ENCODE measurements at regions of chr10 and their contacts with region 1.

Region 1: GRCh38 chr10:100653957-100654781 is 91.2 kb upstream of the PAX2 start:
- DNase-seq: no peak
- H3K4me3 ChIP-seq: peak overlapping the region; percentile 29
- H3K4me3 Mint-ChIP-seq: peak overlapping the region; percentile 90
- H3K27ac Mint-ChIP-seq: peak overlapping the region; percentile 26
- H3K4me1 ChIP-seq: peaks cover 12% of the 10 kb centered on the region
- H3K4me1 Mint-ChIP-seq: peaks cover 18% of the 10 kb centered on the region
- H3K27me3 ChIP-seq: peaks cover 2% of the 10 kb centered on the region
- H3K27me3 Mint-ChIP-seq: peaks cover 39% of the 10 kb centered on the region
- CTCF ChIP-seq: no peak

Region 2: DNA sequence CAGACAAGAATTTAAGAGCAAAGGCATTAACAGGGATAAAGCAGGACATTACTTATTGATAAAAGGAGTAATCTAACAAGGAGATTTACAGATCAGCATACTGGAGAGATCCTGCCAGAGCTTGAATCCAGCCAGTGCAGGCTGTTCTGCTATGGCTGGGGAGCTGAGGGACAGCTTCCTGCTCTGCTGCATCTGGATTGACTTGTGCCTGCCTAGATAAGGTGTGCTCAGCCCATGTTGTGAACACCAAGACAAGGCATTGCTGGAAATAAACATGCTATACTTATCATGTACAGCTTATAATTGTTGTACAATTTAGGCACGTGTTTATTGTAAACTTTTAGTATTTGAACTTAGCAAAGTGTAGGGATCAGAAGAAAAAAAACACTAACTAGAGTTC is 46.7 kb before region 1 on chr10:
- CTCF ChIA-PET with region 1: no interaction called
- POLR2A ChIA-PET with region 1: no interaction called
- intact Hi-C with region 1: loop called (anchors 2 kb)
- DNase-seq: peak in 1 of 2 experiments; percentile 24
- H3K4me3 ChIP-seq: no peak overlapping the region
- H3K4me3 Mint-ChIP-seq: no peak overlapping the region
- H3K27ac Mint-ChIP-seq: no peak overlapping the region
- H3K4me1 ChIP-seq: peaks cover 12% of the 10 kb centered on the region
- H3K4me1 Mint-ChIP-seq: peaks cover 9% of the 10 kb centered on the region
- H3K27me3 ChIP-seq: 0 out of 2 replicates have a peak, but pooled peaks cover 1% of the 10 kb centered on the region
- H3K27me3 Mint-ChIP-seq: peaks cover 20% of the 10 kb centered on the region
- CTCF ChIP-seq: no peak